AG04449 (cell line): ENCODE measurements at regions of chr2 and their contacts with region 1.

Region 1: GRCh38 chr2:157194097-157194688 is 63.3 kb upstream of the GALNT5 start:
- DNase-seq: no peak
- H3K4me3 ChIP-seq: no peak overlapping the region
- CTCF ChIP-seq: peak; percentile 55

Region 2: DNA sequence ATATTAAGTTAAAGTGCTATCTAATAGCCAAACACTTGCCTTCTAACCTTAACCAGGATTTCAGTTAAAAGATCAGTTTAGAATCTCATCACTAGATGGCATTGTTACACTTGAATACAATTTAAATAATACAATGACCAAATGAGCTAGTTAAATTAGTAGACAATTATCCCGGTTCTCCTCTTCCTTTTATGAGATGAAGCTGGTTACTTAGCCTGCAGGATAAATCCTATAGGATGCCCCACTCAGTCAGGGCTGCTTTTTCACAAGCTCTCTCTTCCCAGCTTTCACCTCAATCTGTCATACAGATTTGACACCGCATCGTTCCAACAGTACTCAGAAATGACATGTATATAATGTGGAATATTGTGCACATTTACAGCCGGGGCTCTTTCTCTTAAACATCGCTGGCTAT is 1816.9 kb before region 1 on chr2:
- CTCF ChIA-PET with region 1: interaction called, 31 read pairs
- POLR2A ChIA-PET with region 1: no interaction called
- DNase-seq: no peak
- H3K4me3 ChIP-seq: no peak overlapping the region
- CTCF ChIP-seq: peak; percentile 0

Region 3: DNA sequence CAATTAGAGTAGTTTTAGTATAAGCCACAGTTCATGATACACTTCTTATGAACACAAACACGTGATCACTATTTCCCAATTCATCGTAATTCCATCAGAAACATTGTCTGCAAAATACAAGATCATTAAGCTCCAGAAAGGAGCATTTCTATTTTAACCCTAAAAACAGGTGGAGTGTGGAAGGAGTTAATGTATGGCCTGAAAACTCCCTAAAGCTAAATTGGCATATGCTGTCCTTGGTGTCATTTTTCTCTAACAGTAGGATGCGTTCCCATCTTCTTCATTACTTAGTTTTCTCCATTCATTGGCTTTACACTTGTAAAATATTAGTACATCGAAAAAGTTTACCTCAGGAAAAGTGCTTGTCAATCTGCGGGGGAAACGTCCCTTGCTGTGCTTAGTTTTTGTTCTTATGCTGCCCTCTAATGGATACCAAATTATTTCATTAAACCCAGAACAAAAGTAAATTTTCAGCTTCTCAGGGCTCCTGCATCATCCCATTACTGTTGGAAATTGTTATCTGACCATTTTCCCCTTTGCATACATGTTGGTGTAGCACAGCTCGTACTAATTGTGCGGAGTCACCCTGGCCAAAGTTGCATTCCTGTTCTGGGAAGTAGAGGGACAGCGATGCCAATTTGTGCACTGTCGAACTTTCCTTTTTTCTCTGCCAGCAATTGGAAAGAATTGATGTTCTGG is 604.7 kb before region 1 on chr2:
- CTCF ChIA-PET with region 1: interaction called, 18 read pairs
- POLR2A ChIA-PET with region 1: no interaction called
- DNase-seq: no peak
- H3K4me3 ChIP-seq: no peak overlapping the region
- CTCF ChIP-seq: peak; percentile 35

Region 4: GRCh38 chr2:157176602-157177001 is 17.6 kb before region 1 on chr2:
- CTCF ChIA-PET with region 1: interaction called, 13 read pairs
- POLR2A ChIA-PET with region 1: no interaction called
- DNase-seq: no peak
- H3K4me3 ChIP-seq: no peak overlapping the region
- CTCF ChIP-seq: no peak